Ovary (tissue), 10 donors: ENCODE measurements at regions of chrX and their contacts with region 1.

Region 1: DNA sequence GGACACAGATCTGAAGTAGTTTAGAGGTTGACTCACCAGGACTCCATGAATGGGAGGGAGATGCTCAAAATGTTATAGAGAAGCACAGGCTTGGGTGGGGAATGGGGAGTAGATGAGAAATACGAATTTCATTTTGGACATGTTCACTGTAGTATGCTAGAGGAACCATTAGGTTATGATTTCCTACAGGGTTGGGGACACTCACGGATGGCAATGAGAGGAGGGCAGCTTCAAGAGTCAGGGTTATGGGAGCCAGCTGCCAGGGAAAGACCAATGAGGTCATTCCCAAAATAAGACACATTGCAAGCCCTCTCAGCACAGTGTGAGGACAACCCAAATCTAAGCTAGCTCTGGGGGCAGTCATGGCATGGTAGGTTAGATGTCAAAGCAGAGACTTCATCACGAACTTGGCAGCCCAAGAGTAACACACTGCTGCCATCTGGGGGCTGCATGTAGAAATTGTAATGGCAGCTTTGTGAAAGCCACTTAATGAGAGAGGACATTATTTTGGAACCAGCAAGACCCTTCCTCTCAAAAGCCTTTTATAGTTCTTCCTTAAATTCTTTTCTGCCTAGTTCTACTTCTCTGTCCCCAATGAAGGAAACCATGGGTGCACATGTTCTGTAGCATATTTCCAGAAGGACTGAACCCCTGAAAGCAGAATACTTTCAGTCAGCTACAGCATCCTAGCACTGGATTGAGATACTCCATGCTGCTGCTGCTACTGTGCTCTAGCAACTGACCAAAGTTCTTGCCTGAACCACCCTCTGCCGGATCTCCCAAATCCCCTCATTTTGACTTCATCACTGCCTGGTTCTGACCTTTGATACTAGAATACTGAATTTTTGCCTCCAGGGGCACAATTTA is 16.2 kb upstream of the ZCCHC12 start:
- DNase-seq: peak; percentile 22 to 55 (median 47)
- H3K4me3 ChIP-seq: no peak overlapping the region
- H3K27ac ChIP-seq: no peak overlapping the region
- H3K4me1 ChIP-seq: no peaks in the 10 kb centered on the region
- H3K27me3 ChIP-seq: no peaks in the 10 kb centered on the region
- CTCF ChIP-seq: peak in 2 of 3 donors; percentile 59 to 63
- EP300 ChIP-seq: no peak
- POLR2A ChIP-seq: no peak

Region 2: DNA sequence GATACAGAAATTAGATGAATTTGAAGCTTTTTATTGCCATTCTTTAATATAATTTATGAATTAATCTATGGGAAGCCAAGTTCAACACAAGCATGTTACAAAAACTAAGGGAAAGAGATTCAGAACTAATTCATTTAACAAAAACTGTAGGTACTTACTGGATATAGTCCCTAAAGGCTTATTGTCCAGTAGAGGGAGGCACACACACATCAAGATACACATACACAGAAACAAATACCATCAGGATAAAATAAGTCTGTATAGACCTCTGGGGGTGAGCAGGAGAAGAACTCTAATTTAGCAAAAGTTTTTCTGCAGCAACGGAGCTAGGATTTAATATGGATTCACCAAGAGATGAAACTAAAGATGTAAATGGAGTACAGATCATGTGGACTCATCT is 163.0 kb before region 1 on chrX:
- intact Hi-C with region 1: loop called in 3 of 4 experiments (anchors 5 to 10 kb)
- DNase-seq: no peak
- H3K4me3 ChIP-seq: no peak overlapping the region
- H3K27ac ChIP-seq: no peak overlapping the region
- H3K4me1 ChIP-seq: no peaks in the 10 kb centered on the region
- H3K27me3 ChIP-seq: no peaks in the 10 kb centered on the region
- CTCF ChIP-seq: peak in 2 of 3 donors; percentile 26 to 32
- EP300 ChIP-seq: no peak
- POLR2A ChIP-seq: no peak

Region 3: DNA sequence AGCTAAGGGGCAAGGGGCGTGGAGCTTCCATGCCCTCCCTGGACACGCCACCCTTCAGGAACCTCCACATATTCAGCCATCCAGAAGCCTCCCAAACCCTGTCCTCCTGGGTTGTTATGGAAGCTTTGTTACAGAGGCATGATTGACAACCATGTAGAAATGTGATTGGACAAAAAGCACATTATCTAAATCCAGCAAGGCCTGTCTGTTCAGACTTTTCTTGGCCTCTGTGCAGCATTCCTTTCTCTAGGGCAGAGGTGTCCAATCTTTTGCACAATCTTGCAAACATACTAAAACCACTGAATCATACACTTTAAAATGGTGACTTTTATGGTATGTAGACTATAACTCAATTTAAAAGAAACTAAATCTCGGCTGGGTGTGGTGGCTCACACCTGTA is 745.1 kb after region 1 on chrX:
- intact Hi-C with region 1: loop called in 1 of 4 experiments (anchors 10 kb)
- DNase-seq: no peak
- H3K4me3 ChIP-seq: no peak overlapping the region
- H3K27ac ChIP-seq: no peak overlapping the region
- H3K4me1 ChIP-seq: no peaks in the 10 kb centered on the region
- H3K27me3 ChIP-seq: no peaks in the 10 kb centered on the region
- CTCF ChIP-seq: no peak
- EP300 ChIP-seq: no peak
- POLR2A ChIP-seq: no peak